Dorsolateral prefrontal cortex (tissue), 120 donors: ENCODE measurements at regions of chr1 and their contacts with region 1.

Region 1: GRCh38 chr1:7646981-7647901 is 123.9 kb upstream of the VAMP3 start:
- DNase-seq: peak; percentile 62 to 85 (median 70)
- H3K4me3 ChIP-seq: no peak overlapping the region
- H3K27ac ChIP-seq: peak overlapping the region in 1 of 59 donors; percentile 27
- H3K27me3 ChIP-seq: no peaks in the 10 kb centered on the region
- CTCF ChIP-seq: peak; percentile 79 to 99 (median 96)

Region 2: DNA sequence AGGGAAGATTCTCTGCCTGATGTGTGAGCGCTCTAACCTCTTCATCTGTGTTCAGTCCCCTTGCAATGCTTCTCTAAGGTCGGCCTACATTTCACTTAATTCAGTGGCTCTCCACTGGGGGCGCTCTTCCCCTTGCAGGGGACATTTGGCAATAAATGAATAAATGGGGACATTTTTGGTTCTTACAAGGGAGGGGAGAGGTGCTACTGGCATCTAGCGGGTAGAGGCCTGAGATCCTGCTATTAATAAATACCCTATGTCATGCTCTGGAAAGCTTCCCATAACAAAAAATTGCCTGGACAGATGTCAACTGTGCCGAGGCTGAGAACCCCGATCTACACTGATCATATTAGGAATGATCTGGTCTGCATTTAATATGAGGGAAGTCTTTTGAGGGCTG is 919.7 kb before region 1 on chr1:
- intact Hi-C with region 1: loop called in 1 of 2 experiments (anchors 5 kb)
- DNase-seq: peak in 1 of 10 donors; percentile 19
- H3K4me3 ChIP-seq: no peak overlapping the region
- H3K27ac ChIP-seq: no peak overlapping the region
- H3K27me3 ChIP-seq: no peaks in the 10 kb centered on the region
- CTCF ChIP-seq: peak; percentile 49 to 88 (median 74)

Region 3: DNA sequence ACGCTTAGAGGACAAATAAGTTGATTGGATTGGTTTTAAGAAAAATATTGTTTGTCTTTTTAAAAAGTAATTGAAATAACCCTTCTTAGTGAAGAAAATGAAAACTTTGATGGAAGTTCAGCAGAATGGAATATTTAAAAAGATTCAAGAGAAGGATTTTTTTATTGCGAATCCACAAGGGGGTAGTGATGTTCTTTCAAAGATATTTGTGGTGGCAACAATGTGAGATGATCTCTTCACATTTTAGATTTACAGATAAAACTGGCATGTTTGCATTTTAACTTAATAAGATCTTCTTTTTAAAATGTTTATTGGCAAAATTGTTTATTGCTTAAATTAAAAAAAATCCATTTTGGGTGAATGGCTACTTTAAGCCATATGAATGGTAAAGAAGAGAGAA is 853.1 kb before region 1 on chr1:
- intact Hi-C with region 1: loop called (anchors 5 to 10 kb)
- DNase-seq: no peak
- H3K4me3 ChIP-seq: no peak overlapping the region
- H3K27ac ChIP-seq: no peak overlapping the region
- H3K27me3 ChIP-seq: no peaks in the 10 kb centered on the region
- CTCF ChIP-seq: peak in 55 of 56 donors; percentile 47 to 83 (median 65)

Region 4: GRCh38 chr1:7224644-7225043 is 422.6 kb before region 1 on chr1:
- intact Hi-C with region 1: loop called in 1 of 2 experiments (anchors 10 kb)
- DNase-seq: no peak
- H3K4me3 ChIP-seq: no peak overlapping the region
- H3K27ac ChIP-seq: no peak overlapping the region
- H3K27me3 ChIP-seq: no peaks in the 10 kb centered on the region
- CTCF ChIP-seq: no peak

Region 5: GRCh38 chr1:7454052-7454815 is 193.0 kb before region 1 on chr1:
- intact Hi-C with region 1: loop called (anchors 1 to 5 kb)
- DNase-seq: peak in 5 of 10 donors; percentile 16 to 67 (median 38)
- H3K4me3 ChIP-seq: no peak overlapping the region
- H3K27ac ChIP-seq: peak overlapping the region in 1 of 59 donors; percentile 66
- H3K27me3 ChIP-seq: no peaks in the 10 kb centered on the region
- CTCF ChIP-seq: peak in 52 of 56 donors; percentile 19 to 73 (median 52)